ENCODE measurements at regions of chr13 and their contacts with region 1.

Region 1: DNA sequence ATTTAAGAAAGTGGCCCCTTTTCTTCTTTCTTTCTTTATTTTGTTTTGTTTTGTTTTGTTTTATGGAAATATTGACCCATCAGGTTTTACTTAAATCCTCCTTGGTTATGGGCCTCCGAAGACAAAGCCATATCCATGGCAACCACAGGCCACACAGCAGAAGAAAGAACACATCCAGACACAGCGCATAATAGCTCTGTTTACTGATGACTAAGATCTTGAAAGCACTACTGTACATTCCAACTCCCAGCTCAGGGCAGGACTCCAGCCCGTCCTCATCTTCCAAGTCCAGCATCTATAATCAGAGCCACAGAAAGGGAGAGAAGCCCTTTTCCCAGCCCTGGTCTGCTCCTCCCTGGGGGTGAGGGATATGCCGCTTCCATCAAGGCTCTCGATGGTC is 84.3 kb downstream of the NUFIP1 start:
- DNase-seq: peak; percentile 91

Region 2: GRCh38 chr13:44306401-44307192 is 598.4 kb before region 1 on chr13:
- intact Hi-C with region 1: no loop called
- DNase-seq: no peak

Region 3: GRCh38 chr13:44710576-44710975 is 194.4 kb before region 1 on chr13:
- intact Hi-C with region 1: loop called in 1 of 2 experiments (anchors 10 kb)
- DNase-seq: no peak

Region 4: GRCh38 chr13:44826591-44827350 is 78.2 kb before region 1 on chr13:
- intact Hi-C with region 1: no loop called
- DNase-seq: no peak

Region 5: DNA sequence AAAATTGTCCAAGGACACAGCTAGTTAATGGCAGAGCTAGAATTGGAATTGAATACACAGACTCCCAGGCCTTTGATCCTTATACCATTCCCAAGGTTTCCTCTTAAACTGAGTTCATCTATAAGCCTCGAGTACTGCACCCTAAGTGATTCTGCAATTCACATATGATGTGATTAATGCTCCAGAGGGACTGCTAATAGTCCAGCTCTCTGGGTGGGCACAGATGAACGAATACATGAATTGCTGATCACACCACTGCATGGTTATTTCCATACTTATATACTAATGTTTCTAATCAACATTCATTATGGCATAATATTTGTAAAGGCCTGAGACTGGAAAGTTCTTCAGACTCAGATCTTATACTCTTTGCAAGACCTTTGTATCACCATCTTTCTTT is 17.5 kb before region 1 on chr13:
- intact Hi-C with region 1: loop called in 1 of 2 experiments (anchors 1 kb)
- DNase-seq: no peak

Measured in posterior vena cava (tissue), 2 donors.